Mammary epithelial cell (primary cell): ENCODE measurements at regions of chr11 and their contacts with region 1.

Region 1: GRCh38 chr11:115324581-115325432 is 179.4 kb downstream of the CADM1 start:
- DNase-seq: peak; percentile 50
- H3K4me3 ChIP-seq: no peak overlapping the region
- H3K27ac ChIP-seq: no peak overlapping the region
- H3K4me1 ChIP-seq: no peaks in the 10 kb centered on the region
- H3K27me3 ChIP-seq: no peaks in the 10 kb centered on the region
- CTCF ChIP-seq: peak; percentile 87 to 90

Region 2: DNA sequence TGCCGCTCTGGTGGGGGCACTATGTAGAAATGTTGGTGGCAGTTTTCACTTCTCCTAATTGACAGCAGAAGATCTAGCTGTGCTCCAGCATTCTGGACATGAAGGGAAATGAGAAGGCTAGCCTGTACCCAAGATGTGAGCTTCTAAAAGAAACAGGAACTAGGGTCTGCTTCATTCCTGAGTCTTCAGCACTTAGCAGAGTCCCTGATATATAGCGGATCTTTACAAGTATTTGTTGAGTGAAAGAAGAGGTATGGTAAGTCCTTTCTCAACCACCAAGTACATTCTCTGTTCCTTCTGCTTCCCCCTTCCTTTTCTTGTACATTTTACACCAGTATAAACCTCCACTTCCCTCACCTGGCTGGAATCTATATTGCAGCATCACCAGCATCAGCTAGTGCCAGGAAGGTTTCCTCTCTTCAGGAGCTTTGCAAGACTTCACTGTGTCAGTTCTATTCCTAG is 587.7 kb after region 1 on chr11:
- CTCF ChIA-PET with region 1: no interaction called
- dilution Hi-C with region 1: no loop called
- in situ Hi-C with region 1: loop called in 1 of 2 experiments (anchors 25 kb)
- intact Hi-C with region 1: loop called (anchors 5 kb)
- DNase-seq: peak; percentile 30
- H3K4me3 ChIP-seq: no peak overlapping the region
- H3K27ac ChIP-seq: no peak overlapping the region
- H3K4me1 ChIP-seq: no peaks in the 10 kb centered on the region
- H3K27me3 ChIP-seq: no peaks in the 10 kb centered on the region
- CTCF ChIP-seq: peak; percentile 60 to 71

Region 3: DNA sequence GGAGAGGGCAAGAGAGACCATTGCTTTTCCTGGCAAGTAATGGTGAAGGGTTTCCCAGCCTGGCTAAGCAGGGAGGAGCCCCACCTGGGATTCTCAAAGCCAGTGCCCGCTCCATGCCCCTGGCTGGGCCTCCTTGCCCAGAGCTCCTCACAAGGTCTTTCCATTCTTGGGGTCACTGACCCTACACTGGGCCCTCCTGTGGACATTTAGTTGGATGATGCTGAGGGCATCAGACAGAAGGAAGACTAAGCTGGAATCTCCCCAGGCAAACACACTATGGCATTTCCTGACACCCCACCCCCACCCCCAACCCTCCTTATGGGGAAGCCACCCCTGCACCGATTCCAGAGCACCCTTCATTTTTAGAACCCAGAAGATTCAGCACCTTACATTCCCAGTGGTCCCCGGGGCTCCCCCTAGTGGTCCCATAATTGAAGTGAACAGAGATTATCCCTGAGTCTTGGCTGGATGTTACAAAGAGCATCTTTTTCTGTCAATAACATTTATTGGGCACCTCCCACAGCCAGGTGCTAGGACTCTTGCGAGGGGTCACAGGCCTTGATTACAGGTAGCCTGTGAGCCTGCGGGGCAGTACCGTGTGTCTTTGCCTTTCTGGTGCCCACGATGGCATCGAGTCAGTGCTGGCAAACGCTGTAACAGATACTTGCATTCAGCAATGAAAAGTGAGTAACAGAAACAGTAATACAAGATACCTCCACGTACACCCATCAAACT is 899.5 kb after region 1 on chr11:
- CTCF ChIA-PET with region 1: no interaction called
- dilution Hi-C with region 1: no loop called
- in situ Hi-C with region 1: loop called in 1 of 2 experiments (anchors 25 kb)
- intact Hi-C with region 1: loop called (anchors 5 kb)
- DNase-seq: no peak
- H3K4me3 ChIP-seq: no peak overlapping the region
- H3K27ac ChIP-seq: no peak overlapping the region
- H3K4me1 ChIP-seq: no peaks in the 10 kb centered on the region
- H3K27me3 ChIP-seq: peaks cover 4% of the 10 kb centered on the region
- CTCF ChIP-seq: peak; percentile 67 to 80

Region 4: GRCh38 chr11:116276051-116277044 is 951.5 kb after region 1 on chr11:
- CTCF ChIA-PET with region 1: no interaction called
- dilution Hi-C with region 1: no loop called
- in situ Hi-C with region 1: no loop called
- intact Hi-C with region 1: loop called (anchors 5 kb)
- DNase-seq: peak; percentile 17
- H3K4me3 ChIP-seq: peak overlapping the region in 2 of 3 experiments; percentile 20 to 35
- H3K27ac ChIP-seq: no peak overlapping the region
- H3K4me1 ChIP-seq: no peaks in the 10 kb centered on the region
- H3K27me3 ChIP-seq: no peaks in the 10 kb centered on the region
- CTCF ChIP-seq: peak; percentile 70 to 84

Region 5: DNA sequence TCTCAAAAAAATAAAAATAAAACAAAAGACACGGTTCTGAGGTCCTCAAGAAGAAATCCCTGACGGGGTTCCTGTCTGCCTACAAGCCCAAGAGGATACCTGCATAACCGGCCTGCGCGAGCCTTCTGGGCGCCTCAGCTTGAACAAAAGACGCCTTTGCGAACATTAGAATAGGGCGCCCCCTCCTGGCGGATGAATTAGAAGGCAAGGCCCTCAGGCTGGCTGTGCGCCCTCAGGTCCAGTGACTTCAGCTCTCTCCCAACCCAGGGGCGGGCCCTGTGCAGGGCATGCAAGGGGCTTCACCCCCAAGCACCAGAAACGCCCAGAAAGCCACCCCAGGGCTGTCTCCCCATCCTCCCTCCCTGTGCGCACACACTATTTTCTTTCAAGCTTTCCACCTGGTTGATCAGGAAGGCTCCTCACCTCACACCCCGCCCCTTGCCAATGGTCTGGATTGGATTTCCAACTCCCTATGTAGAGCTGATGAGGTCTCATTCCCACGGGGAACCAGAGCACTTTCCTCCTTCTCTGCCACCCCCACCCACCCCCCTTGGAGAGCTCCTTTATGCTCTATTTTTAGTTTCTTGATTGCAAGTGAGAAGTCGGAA is 1174.7 kb after region 1 on chr11:
- CTCF ChIA-PET with region 1: no interaction called
- dilution Hi-C with region 1: no loop called
- in situ Hi-C with region 1: no loop called
- intact Hi-C with region 1: loop called (anchors 1 kb)
- DNase-seq: peak; percentile 33
- H3K4me3 ChIP-seq: no peak overlapping the region
- H3K27ac ChIP-seq: no peak overlapping the region
- H3K4me1 ChIP-seq: no peaks in the 10 kb centered on the region
- H3K27me3 ChIP-seq: peaks cover 10% of the 10 kb centered on the region
- CTCF ChIP-seq: peak; percentile 44 to 62

Region 6: GRCh38 chr11:116641561-116642045 is 1316.8 kb after region 1 on chr11:
- CTCF ChIA-PET with region 1: no interaction called
- dilution Hi-C with region 1: no loop called
- in situ Hi-C with region 1: no loop called
- intact Hi-C with region 1: loop called (anchors 2 kb)
- DNase-seq: peak; percentile 14
- H3K4me3 ChIP-seq: no peak overlapping the region
- H3K27ac ChIP-seq: no peak overlapping the region
- H3K4me1 ChIP-seq: no peaks in the 10 kb centered on the region
- H3K27me3 ChIP-seq: no peaks in the 10 kb centered on the region
- CTCF ChIP-seq: peak; percentile 87 to 95

Region 7: GRCh38 chr11:116691771-116692177 is 1367.0 kb after region 1 on chr11:
- CTCF ChIA-PET with region 1: no interaction called
- dilution Hi-C with region 1: no loop called
- in situ Hi-C with region 1: loop called in 1 of 2 experiments (anchors 25 kb)
- intact Hi-C with region 1: loop called (anchors 1 kb)
- DNase-seq: no peak
- H3K4me3 ChIP-seq: no peak overlapping the region
- H3K27ac ChIP-seq: no peak overlapping the region
- H3K4me1 ChIP-seq: peaks cover 35% of the 10 kb centered on the region
- H3K27me3 ChIP-seq: no peaks in the 10 kb centered on the region
- CTCF ChIP-seq: peak; percentile 65 to 88